K562 (cell line): ENCODE measurements at regions of chr19 and their contacts with region 1.

Region 1: GRCh38 chr19:13150187-13150930 is at the starts of genes IER2 and STX10:
- DNase-seq: peak; percentile 84 to 97 (median 88)
- ATAC-seq: peak; percentile 71
- H3K4me3 ChIP-seq: peak within 1 kb of the TSS; percentile 97
- H3K27ac ChIP-seq: peak within 1 kb of the TSS; percentile 84
- H3K4me1 ChIP-seq: peaks cover 6 to 60% of the 10 kb centered on the region in 2 experiments; a peak in 4 of 5 replicates
- H3K27me3 ChIP-seq: no peaks in the 10 kb centered on the region
- CTCF ChIP-seq: peak; percentile 71 to 75 (median 73)
- EP300 ChIP-seq: peak; percentile 29; the same call in 1 of the 2 replicates
- POLR2A ChIP-seq: peak; percentile 76
- RAD21 ChIP-seq: peak; percentile 24 to 46; a peak in 3 of 4 replicates
- polyA plus RNA-seq, gene IER2: 4.5 to 5.1 TPM
- polyA plus RNA-seq, gene STX10: 0.51 to 1.7 TPM

Region 2: GRCh38 chr19:13099073-13099999 is 51.0 kb before region 1 on chr19:
- CTCF ChIA-PET with region 1: no interaction called
- POLR2A ChIA-PET with region 1: interaction called, 16 read pairs
- in situ Hi-C with region 1: no loop called
- intact Hi-C with region 1: loop called (anchors 2 kb)
- DNase-seq: peak; percentile 45 to 88 (median 60)
- ATAC-seq: peak; percentile 10
- H3K4me3 ChIP-seq: peak overlapping the region; percentile 98
- H3K27ac ChIP-seq: peak overlapping the region; percentile 98
- H3K4me1 ChIP-seq: peaks cover 42 to 82% of the 10 kb centered on the region in 2 experiments
- H3K27me3 ChIP-seq: no peaks in the 10 kb centered on the region
- CTCF ChIP-seq: no peak
- EP300 ChIP-seq: no peak
- POLR2A ChIP-seq: no peak
- RAD21 ChIP-seq: no peak; a peak in 1 of 4 replicates

Region 3: DNA sequence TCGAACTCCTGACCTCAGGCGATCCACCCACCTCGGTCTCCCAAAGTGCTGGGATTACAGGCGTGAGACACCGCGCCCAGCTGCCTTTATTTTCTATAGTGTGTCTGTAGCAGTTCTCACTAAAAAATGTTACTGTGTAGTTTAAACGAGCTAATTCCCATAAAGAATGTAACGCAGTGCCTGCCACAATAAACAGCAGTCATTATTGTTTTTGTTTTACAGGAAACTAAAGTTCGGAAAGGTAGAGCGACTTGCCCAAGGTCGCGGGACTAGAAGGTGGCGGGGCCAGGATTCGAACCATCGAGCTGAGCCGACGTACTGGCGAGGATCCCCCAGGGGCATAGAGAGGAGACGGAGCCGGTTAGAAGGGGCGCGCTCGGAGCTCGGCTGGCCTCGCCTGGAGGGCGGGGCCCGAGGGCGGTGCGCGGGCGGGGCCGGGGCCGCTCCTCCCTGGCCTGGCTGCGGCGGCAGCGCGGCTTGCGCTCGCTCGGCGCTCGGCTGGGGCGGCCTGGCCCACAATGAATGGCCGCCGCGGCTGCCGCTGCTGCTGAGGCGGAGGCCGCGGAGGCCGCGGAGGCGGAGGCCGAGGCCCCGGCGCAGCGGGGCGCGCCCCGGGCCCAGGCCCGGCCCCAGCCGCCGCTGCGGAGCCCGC is 32.5 kb before region 1 on chr19 and contains the start of gene NACC1:
- CTCF ChIA-PET with region 1: no interaction called
- POLR2A ChIA-PET with region 1: interaction called, 31 read pairs
- in situ Hi-C with region 1: no loop called
- intact Hi-C with region 1: loop called (anchors 2 kb)
- DNase-seq: peak; percentile 87 to 97 (median 92)
- ATAC-seq: peak; percentile 92
- H3K4me3 ChIP-seq: peak within 1 kb of the TSS; percentile 99
- H3K27ac ChIP-seq: peak within 1 kb of the TSS; percentile 95
- H3K4me1 ChIP-seq: peaks cover 21 to 50% of the 10 kb centered on the region in 2 experiments; a peak in 4 of 5 replicates
- H3K27me3 ChIP-seq: no peaks in the 10 kb centered on the region
- CTCF ChIP-seq: no peak
- EP300 ChIP-seq: peak; percentile 24; the same call in 1 of the 2 replicates
- POLR2A ChIP-seq: no peak; the same call in 1 of the 2 replicates
- RAD21 ChIP-seq: 0 out of 4 replicates have a peak, but pooled peaks of 1 of the 2 experiments have one; percentile 9
- polyA plus RNA-seq, gene NACC1: 0.04 to 0.17 TPM

Region 4: GRCh38 chr19:13162518-13163314 is 12.4 kb after region 1 on chr19:
- CTCF ChIA-PET with region 1: no interaction called
- POLR2A ChIA-PET with region 1: interaction called, 45 read pairs
- in situ Hi-C with region 1: no loop called
- intact Hi-C with region 1: no loop called
- DNase-seq: peak; percentile 94 to 99 (median 94)
- ATAC-seq: peak; percentile 91
- H3K4me3 ChIP-seq: peak overlapping the region; percentile 48
- H3K27ac ChIP-seq: peak overlapping the region; percentile 98
- H3K4me1 ChIP-seq: peaks cover 34 to 58% of the 10 kb centered on the region in 2 experiments
- H3K27me3 ChIP-seq: no peaks in the 10 kb centered on the region
- CTCF ChIP-seq: peak in 1 of 3 experiments; percentile 1; a peak in 1 of 6 replicates
- EP300 ChIP-seq: peak; percentile 20; the same call in 1 of the 2 replicates
- POLR2A ChIP-seq: peak; percentile 85
- RAD21 ChIP-seq: no peak

Region 5: DNA sequence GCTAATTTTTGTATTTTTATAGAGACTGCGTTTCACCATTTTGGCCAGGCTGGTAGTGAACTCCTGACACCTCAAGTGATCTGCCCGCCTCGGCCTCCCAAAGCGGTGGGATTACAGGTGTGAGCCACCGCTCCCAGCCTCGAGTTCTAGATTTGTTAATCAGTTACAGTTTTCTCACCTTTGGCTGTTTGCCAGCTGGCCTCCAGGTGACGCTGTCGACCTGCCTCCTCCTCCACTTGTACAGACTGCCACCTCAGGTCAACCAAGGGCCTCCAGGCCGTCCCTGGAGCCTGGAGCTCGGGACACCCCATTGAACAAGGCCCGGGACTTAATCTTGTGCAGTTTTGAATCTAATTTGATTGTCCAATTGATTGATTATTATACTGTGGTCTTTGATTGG is 45.3 kb after region 1 on chr19:
- CTCF ChIA-PET with region 1: no interaction called
- POLR2A ChIA-PET with region 1: interaction called, 4 read pairs
- in situ Hi-C with region 1: no loop called
- intact Hi-C with region 1: loop called (anchors 5 kb)
- DNase-seq: peak; percentile 50 to 72 (median 55)
- ATAC-seq: peak; percentile 77
- H3K4me3 ChIP-seq: no peak overlapping the region
- H3K27ac ChIP-seq: no peak overlapping the region
- H3K4me1 ChIP-seq: peaks cover 6% of the 10 kb centered on the region in 2 experiments; a peak in 3 of 5 replicates
- H3K27me3 ChIP-seq: no peaks in the 10 kb centered on the region; a peak in 1 of 5 replicates
- CTCF ChIP-seq: peak; percentile 54 to 96 (median 72); a peak in 5 of 6 replicates
- EP300 ChIP-seq: no peak
- POLR2A ChIP-seq: no peak
- RAD21 ChIP-seq: peak in 1 of 2 experiments; percentile 39; a peak in 1 of 4 replicates